T-cell (primary cell): ENCODE measurements at regions of chr10 and their contacts with region 1.

Region 1: GRCh38 chr10:102009801-102010425 is 46.1 kb downstream of the ARMH3 start:
- DNase-seq: peak in 28 of 35 experiments; percentile 1 to 71 (median 18)
- ATAC-seq: peak; percentile 76 to 84 (median 79)
- H3K4me3 ChIP-seq: no peak overlapping the region
- H3K4me3 Mint-ChIP-seq: no peak overlapping the region
- H3K27ac ChIP-seq: no peak overlapping the region
- H3K27ac Mint-ChIP-seq: no peak overlapping the region
- H3K4me1 ChIP-seq: no peaks in the 10 kb centered on the region
- H3K4me1 Mint-ChIP-seq: peaks cover 0 to 10% (median 0%) of the 10 kb centered on the region in 3 donors
- H3K27me3 ChIP-seq: no peaks in the 10 kb centered on the region
- H3K27me3 Mint-ChIP-seq: no peaks in the 10 kb centered on the region

Region 2: DNA sequence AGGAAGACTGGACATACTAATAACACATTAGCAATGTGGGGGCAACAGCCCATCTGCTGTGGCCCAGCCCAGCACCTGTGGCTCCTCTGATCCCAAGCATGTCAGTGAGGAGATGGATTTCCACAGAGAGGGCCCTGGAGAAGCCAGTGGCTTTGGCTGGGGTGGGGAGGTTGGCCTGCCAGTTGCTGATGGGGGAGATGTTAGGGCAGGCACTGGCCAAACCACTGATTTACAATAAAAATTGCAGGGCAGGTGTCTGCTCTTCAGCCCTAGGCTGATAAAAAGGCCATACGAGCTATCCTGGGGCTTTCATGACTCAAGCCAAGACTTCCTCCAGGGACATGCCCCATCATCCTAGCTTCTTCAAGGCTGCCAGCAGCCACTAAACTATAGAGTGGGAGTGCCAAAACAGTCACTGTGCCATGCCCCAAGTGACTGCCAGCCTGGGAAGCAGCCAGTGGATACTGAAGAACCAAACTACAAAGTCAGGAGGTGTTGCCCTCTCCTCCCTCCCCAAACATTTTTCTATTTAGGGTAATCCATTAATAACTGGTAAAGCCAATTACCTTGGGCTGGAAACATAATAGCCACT is 384.0 kb before region 1 on chr10:
- CTCF ChIA-PET with region 1: no interaction called
- POLR2A ChIA-PET with region 1: no interaction called
- DNase-seq: no peak
- ATAC-seq: no peak
- H3K4me3 ChIP-seq: no peak overlapping the region
- H3K4me3 Mint-ChIP-seq: no peak overlapping the region
- H3K27ac ChIP-seq: no peak overlapping the region
- H3K27ac Mint-ChIP-seq: no peak overlapping the region
- H3K4me1 ChIP-seq: no peaks in the 10 kb centered on the region
- H3K4me1 Mint-ChIP-seq: peaks cover 15 to 29% (median 17%) of the 10 kb centered on the region in 3 donors
- H3K27me3 ChIP-seq: no peaks in the 10 kb centered on the region
- H3K27me3 Mint-ChIP-seq: no peaks in the 10 kb centered on the region

Region 3: GRCh38 chr10:101889256-101890210 is 120.4 kb before region 1 on chr10:
- CTCF ChIA-PET with region 1: interaction called, 4 to 11 read pairs
- POLR2A ChIA-PET with region 1: no interaction called
- DNase-seq: peak; percentile 19 to 72 (median 57)
- ATAC-seq: peak; percentile 58 to 61 (median 60)
- H3K4me3 ChIP-seq: no peak overlapping the region
- H3K4me3 Mint-ChIP-seq: no peak overlapping the region
- H3K27ac ChIP-seq: no peak overlapping the region
- H3K27ac Mint-ChIP-seq: peak overlapping the region in 1 of 2 donors; percentile 11
- H3K4me1 ChIP-seq: no peaks in the 10 kb centered on the region
- H3K4me1 Mint-ChIP-seq: peaks cover 0 to 6% (median 2%) of the 10 kb centered on the region in 3 donors
- H3K27me3 ChIP-seq: no peaks in the 10 kb centered on the region
- H3K27me3 Mint-ChIP-seq: no peaks in the 10 kb centered on the region

Region 4: DNA sequence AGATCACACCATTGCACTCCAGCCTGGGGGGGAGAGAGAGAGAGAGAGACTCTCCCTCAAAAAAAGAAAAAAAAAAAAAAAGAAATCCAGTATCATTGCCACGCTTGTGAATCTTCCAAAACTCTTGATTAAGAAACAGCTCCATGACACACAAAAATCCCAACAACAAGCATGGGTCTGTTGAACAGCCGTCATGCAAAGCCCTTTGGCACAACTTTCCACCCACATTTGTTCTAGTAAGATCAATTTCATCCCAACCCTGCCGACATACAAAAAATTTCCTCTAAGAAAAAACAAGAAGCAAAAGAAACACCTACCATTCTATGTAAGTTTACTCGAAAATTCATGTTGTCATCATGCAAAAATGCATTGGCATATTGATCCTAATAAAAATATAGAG is 16.7 kb before region 1 on chr10:
- CTCF ChIA-PET with region 1: interaction called, 5 read pairs
- POLR2A ChIA-PET with region 1: interaction called in 1 of 2 experiments, 11 read pairs
- DNase-seq: no peak
- ATAC-seq: no peak
- H3K4me3 ChIP-seq: no peak overlapping the region
- H3K4me3 Mint-ChIP-seq: no peak overlapping the region
- H3K27ac ChIP-seq: no peak overlapping the region
- H3K27ac Mint-ChIP-seq: no peak overlapping the region
- H3K4me1 ChIP-seq: no peaks in the 10 kb centered on the region
- H3K4me1 Mint-ChIP-seq: peaks cover 0 to 2% (median 0%) of the 10 kb centered on the region in 3 donors
- H3K27me3 ChIP-seq: no peaks in the 10 kb centered on the region
- H3K27me3 Mint-ChIP-seq: no peaks in the 10 kb centered on the region